OCI-LY7 (cell line): ENCODE measurements at regions of chr12 and their contacts with region 1.

Region 1: GRCh38 chr12:56763753-56764657 is 881 bp downstream of the HSD17B6 start:
- DNase-seq: no peak
- H3K4me3 ChIP-seq: no peak overlapping the region
- H3K27ac ChIP-seq: no peak overlapping the region
- H3K4me1 ChIP-seq: peaks cover 17% of the 10 kb centered on the region
- CTCF ChIP-seq: no peak

Region 2: DNA sequence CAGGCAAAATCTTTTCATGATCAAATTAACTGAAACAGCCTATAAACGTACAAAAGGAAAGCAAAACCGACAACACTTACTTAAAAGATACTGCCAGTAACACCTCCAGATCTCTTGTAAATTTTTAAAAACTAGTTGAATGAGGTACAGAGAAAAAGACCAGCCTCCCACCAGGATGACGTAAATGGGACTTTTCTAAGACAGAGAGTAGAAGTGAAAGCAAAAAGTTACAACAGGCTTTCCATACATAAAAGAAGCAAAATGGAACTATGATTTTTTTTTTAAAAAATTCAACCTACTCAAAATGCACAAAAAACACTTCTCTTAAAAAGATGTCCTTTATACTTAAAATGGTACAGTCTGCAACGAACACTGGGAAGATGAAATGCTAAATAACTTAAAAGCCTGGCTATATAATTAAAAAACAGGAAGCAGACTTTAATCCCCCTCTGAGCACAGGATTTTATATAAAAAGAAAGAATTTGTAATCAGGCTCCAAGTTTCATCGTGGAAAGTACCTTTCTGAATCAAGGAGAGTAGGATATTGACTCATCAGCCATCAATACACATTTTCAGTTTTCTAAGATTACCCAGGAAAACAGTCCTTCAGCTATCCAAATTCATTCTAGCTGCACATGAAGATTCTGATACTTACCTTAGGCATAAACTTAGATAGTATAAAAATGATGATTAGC is 300.1 kb after region 1 on chr12:
- CTCF ChIA-PET with region 1: no interaction called
- POLR2A ChIA-PET with region 1: no interaction called
- intact Hi-C with region 1: loop called (anchors 5 kb)
- DNase-seq: peak; percentile 28
- H3K4me3 ChIP-seq: peak overlapping the region; percentile 12
- H3K27ac ChIP-seq: peak overlapping the region; percentile 46
- H3K4me1 ChIP-seq: peaks cover 19% of the 10 kb centered on the region
- CTCF ChIP-seq: no peak